CD8-positive, alpha-beta T cell (primary cell): ENCODE measurements at regions of chr11 and their contacts with region 1.

Region 1: GRCh38 chr11:64000026-64000739 is 13.9 kb downstream of the OTUB1 start:
- DNase-seq: peak; percentile 45 to 88 (median 70)
- ATAC-seq: peak; percentile 79
- H3K4me3 ChIP-seq: peak overlapping the region; percentile 24 to 33
- H3K4me3 Mint-ChIP-seq: peak overlapping the region; percentile 56
- H3K27ac ChIP-seq: no peak overlapping the region
- H3K27ac Mint-ChIP-seq: no peak overlapping the region
- H3K4me1 ChIP-seq: peaks cover 17% of the 10 kb centered on the region
- H3K4me1 Mint-ChIP-seq: peaks cover 9% of the 10 kb centered on the region
- H3K27me3 ChIP-seq: no peaks in the 10 kb centered on the region
- H3K27me3 Mint-ChIP-seq: peaks cover 2% of the 10 kb centered on the region
- CTCF ChIP-seq: peak; percentile 82

Region 2: GRCh38 chr11:63599211-63600122 is 400.7 kb before region 1 on chr11:
- CTCF ChIA-PET with region 1: no interaction called
- POLR2A ChIA-PET with region 1: no interaction called
- intact Hi-C with region 1: no loop called
- DNase-seq: no peak
- ATAC-seq: no peak
- H3K4me3 ChIP-seq: no peak overlapping the region
- H3K4me3 Mint-ChIP-seq: no peak overlapping the region
- H3K27ac ChIP-seq: no peak overlapping the region
- H3K27ac Mint-ChIP-seq: no peak overlapping the region
- H3K4me1 ChIP-seq: no peaks in the 10 kb centered on the region
- H3K4me1 Mint-ChIP-seq: peaks cover 4% of the 10 kb centered on the region
- H3K27me3 ChIP-seq: no peaks in the 10 kb centered on the region
- H3K27me3 Mint-ChIP-seq: no peaks in the 10 kb centered on the region
- CTCF ChIP-seq: no peak

Region 3: GRCh38 chr11:63906585-63906984 is 93.6 kb before region 1 on chr11:
- CTCF ChIA-PET with region 1: no interaction called
- POLR2A ChIA-PET with region 1: no interaction called
- intact Hi-C with region 1: no loop called
- DNase-seq: peak; percentile 28 to 74 (median 68)
- ATAC-seq: peak; percentile 77
- H3K4me3 ChIP-seq: no peak overlapping the region
- H3K4me3 Mint-ChIP-seq: no peak overlapping the region
- H3K27ac ChIP-seq: no peak overlapping the region
- H3K27ac Mint-ChIP-seq: no peak overlapping the region
- H3K4me1 ChIP-seq: no peaks in the 10 kb centered on the region
- H3K4me1 Mint-ChIP-seq: peaks cover 3% of the 10 kb centered on the region
- H3K27me3 ChIP-seq: no peaks in the 10 kb centered on the region
- H3K27me3 Mint-ChIP-seq: no peaks in the 10 kb centered on the region
- CTCF ChIP-seq: peak; percentile 38

Region 4: GRCh38 chr11:63974259-63975143 is 25.7 kb before region 1 on chr11 and contains the start of gene COX8A:
- CTCF ChIA-PET with region 1: interaction called, 5 read pairs
- POLR2A ChIA-PET with region 1: interaction called, 4 read pairs
- intact Hi-C with region 1: loop called in 1 of 2 experiments (anchors 1 kb)
- DNase-seq: peak; percentile 89 to 100 (median 90)
- ATAC-seq: peak; percentile 99
- H3K4me3 ChIP-seq: peak within 1 kb of the TSS; percentile 97 to 99
- H3K4me3 Mint-ChIP-seq: peak within 1 kb of the TSS; percentile 100
- H3K27ac ChIP-seq: peak within 1 kb of the TSS; percentile 86 to 97
- H3K27ac Mint-ChIP-seq: peak within 1 kb of the TSS; percentile 99
- H3K4me1 ChIP-seq: peaks cover 16% of the 10 kb centered on the region
- H3K4me1 Mint-ChIP-seq: peaks cover 30% of the 10 kb centered on the region
- H3K27me3 ChIP-seq: no peaks in the 10 kb centered on the region
- H3K27me3 Mint-ChIP-seq: peaks cover 3% of the 10 kb centered on the region
- CTCF ChIP-seq: no peak
- total RNA-seq, gene COX8A: 97.6 to 111 TPM

Region 5: GRCh38 chr11:64152841-64153691 is 152.9 kb after region 1 on chr11:
- CTCF ChIA-PET with region 1: interaction called, 107 read pairs
- POLR2A ChIA-PET with region 1: interaction called, 5 read pairs
- intact Hi-C with region 1: loop called (anchors 1 kb)
- DNase-seq: peak; percentile 50 to 84 (median 71)
- ATAC-seq: peak; percentile 98
- H3K4me3 ChIP-seq: no peak overlapping the region
- H3K4me3 Mint-ChIP-seq: no peak overlapping the region
- H3K27ac ChIP-seq: no peak overlapping the region
- H3K27ac Mint-ChIP-seq: no peak overlapping the region
- H3K4me1 ChIP-seq: no peaks in the 10 kb centered on the region
- H3K4me1 Mint-ChIP-seq: peaks cover 4% of the 10 kb centered on the region
- H3K27me3 ChIP-seq: no peaks in the 10 kb centered on the region
- H3K27me3 Mint-ChIP-seq: peaks cover 2% of the 10 kb centered on the region
- CTCF ChIP-seq: peak; percentile 99